Right ventricle myocardium superior (tissue), 1 donor: ENCODE measurements at regions of chr12 and their contacts with region 1.

Region 1: DNA sequence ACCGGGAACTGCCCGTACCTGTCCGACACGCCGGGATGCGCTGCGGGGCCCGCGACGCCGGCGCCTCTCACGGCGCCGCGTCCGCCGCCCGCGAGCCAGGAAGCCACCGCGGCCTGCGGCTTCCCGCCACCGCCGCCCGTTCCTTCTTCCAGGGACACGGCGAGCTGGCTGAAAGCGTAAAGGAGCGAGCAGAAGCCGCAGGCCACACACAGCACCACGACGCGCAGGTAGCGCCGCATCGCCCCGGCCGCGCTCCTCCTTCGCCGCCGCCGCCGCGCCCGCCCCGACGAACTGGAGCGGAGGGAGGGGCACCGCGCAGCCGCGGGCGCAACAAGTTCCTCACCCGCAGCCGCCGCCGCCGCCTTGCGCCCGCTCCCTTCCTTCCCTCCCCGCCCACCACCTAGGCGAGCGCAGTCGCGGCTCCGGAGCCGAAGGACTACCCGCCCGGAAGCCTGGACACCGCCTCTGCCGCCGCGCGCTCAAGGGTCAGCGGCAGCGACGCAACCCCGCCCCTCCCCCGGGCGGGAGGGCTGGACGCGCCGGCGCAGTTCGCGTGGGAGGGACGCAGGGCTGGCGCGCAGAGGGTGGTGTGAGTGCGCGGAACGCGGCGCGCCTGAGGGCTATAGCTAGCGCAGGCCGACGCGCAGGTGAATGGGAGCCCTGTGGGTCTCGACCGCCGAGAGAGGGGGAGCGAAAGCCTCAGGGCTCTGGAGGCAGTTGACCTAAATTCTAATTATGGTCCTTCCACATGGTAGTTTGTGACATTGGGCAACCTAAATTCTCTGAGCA is at the start of gene GXYLT1:
- DNase-seq: peak; percentile 96
- ATAC-seq: peak; percentile 99
- total RNA-seq, gene GXYLT1: 4.3 TPM

Region 2: DNA sequence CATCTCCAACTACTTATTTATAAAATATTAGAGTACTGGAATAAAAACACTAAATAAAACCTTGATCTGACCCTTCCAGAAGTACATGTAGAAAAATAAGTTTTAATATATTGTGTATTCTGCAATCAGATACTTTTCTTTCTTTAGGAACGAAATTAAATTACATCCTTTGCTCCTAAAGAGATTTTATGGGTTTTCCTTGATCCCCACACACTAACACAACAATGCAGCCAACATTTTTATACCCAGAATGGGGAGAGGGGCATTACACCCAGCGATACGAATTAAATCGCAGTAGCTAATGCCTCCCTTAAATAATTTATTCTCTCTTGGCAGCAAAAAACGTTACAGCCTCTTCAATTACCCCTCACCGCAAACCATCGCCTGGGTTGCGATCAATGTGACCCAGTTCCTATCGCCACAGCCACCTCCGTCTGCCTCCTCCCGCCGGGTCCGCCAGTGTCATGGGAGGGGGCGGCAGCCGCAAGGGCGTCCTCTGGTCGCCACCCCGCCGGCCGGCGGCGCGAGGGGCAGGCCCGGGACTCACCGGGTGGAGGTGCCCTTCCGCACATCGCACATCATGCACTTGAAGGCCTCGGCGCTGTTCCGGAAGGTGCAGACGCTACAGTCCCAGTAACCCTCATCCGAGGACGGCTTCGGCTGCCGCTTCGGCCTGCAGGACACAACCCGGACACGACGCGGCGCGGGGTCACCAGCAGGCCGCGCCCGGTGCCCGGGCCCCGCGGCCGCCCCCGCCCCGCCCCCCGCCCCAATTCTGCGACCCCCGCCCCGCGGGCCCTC is 92.7 kb after region 1 on chr12:
- intact Hi-C with region 1: loop called (anchors 5 kb)
- DNase-seq: peak; percentile 86
- ATAC-seq: peak; percentile 65